Activated CD4-positive, alpha-beta T cell treated with anti-CD3 and anti-CD28 coated beads, Interleukin-2, amount 10 ng/mL, durations not matched to agents 24 days and 14 days (primary cell): ENCODE measurements at regions of chr3 and their contacts with region 1.

Region 1: DNA sequence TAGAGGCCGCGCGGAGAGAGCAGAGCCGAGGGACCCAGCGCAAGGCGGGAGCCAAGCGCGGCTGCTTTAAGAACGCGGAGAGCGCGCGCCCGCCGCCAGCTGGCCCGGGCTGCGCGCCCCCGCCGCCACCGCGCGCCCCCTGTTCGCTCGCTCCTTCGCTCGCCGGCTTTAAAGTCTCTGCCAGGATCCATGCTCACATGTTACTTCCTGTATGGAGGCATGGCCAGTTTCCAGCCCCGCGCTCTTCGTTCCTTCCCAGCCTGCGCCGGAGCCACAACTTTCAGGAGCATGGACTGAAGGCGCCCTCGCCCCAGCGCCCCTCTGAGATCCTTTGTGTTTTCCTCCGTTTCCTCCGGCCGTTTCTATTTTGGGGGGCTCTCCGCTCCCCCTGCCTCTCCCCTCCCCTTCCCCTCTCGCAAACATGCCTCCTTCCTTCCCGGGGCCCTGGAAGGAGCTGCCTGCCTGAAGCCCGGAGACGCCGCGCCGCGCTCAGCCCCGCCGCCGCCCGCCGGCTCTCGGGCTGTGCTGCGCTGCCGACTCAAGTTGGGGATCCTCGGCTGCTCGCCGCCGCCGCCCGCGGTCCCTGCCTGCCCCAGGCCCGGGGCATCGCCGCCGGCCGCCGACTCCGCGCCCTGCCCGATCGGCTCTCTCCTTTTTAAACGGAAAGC is at the start of gene PTPRG:
- DNase-seq: peak; percentile 84
- H3K4me3 Mint-ChIP-seq: peak within 1 kb of the TSS; percentile 96
- H3K27ac Mint-ChIP-seq: peak within 1 kb of the TSS; percentile 74
- H3K4me1 Mint-ChIP-seq: peaks cover 16% of the 10 kb centered on the region
- H3K27me3 Mint-ChIP-seq: peaks cover 59% of the 10 kb centered on the region
- total RNA-seq, gene PTPRG: 4.2 and 4.6 TPM in 2 replicates

Region 2: DNA sequence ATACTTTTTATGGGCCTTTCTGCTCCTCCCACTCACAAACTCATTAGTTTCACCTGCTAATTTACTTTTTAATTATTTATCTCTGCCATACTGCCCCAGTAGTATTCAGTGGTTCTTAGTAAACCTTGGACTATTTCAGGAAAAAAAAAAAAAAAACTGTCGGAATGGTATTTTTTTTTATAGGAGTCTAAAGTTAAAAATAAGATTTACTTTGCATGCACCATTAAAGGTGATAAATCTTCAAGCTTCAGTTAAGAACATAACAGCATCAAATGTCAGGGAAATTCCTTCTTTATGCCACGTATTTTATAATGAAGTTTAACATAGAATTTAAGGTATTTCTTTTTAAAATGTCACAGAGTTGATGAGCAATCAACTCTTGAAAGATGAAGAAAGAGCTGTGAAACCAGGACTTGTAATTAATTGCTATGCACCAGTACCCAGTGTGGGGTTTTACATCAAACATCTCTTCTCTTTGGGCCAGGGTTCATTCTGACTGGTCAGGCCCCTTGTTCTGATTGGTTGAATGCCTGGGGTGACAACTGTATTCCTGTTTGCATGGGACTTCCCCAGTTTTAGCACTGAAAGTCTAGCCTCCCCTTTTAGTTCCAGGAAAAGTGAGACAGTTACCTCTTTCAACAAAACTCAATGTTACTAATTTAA is 40.4 kb before region 1 on chr3:
- intact Hi-C with region 1: loop called (anchors 1 kb)
- DNase-seq: peak; percentile 84
- H3K4me3 Mint-ChIP-seq: peak overlapping the region; percentile 48
- H3K27ac Mint-ChIP-seq: peak overlapping the region; percentile 80
- H3K4me1 Mint-ChIP-seq: peaks cover 37% of the 10 kb centered on the region
- H3K27me3 Mint-ChIP-seq: no peaks in the 10 kb centered on the region

Region 3: GRCh38 chr3:62101488-62101887 is 540.0 kb after region 1 on chr3:
- intact Hi-C with region 1: no loop called
- DNase-seq: no peak
- H3K4me3 Mint-ChIP-seq: no peak overlapping the region
- H3K27ac Mint-ChIP-seq: no peak overlapping the region
- H3K4me1 Mint-ChIP-seq: no peaks in the 10 kb centered on the region
- H3K27me3 Mint-ChIP-seq: no peaks in the 10 kb centered on the region

Region 4: DNA sequence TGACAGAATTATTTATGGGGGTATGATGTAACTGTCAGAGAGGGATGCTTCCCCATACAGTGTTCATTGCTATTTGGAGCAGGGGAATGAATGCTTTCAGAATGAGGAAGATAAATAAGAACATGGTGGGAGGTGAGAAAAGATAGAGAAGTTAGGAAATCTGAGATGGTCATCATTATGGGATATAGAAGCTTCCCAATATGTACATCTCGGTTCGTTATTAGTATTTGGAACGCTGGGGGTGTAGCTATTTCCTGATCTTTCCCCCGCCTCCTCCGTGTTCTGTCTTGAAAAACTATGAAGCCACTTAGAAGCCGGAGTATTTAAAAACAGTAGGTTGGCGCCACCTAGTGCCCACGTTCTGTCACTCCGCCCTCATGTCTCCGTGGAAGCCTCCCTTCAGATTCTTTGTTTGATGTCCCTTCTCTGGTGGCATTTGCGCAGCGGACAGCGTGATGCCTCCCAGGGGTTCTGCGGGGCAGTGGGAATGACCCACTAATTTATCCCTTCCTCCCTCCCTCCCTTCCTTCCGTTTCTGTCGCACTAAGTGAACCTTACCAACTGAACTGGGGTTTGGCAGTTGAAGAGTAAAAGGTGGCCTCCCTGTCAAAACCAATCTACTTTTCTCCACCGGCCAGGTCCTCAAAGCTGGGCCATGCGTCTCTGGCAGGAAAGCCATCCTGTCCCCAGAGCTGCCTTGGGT is 627.3 kb after region 1 on chr3:
- intact Hi-C with region 1: loop called (anchors 5 kb)
- DNase-seq: peak; percentile 88
- H3K4me3 Mint-ChIP-seq: no peak overlapping the region
- H3K27ac Mint-ChIP-seq: no peak overlapping the region
- H3K4me1 Mint-ChIP-seq: peaks cover 4% of the 10 kb centered on the region
- H3K27me3 Mint-ChIP-seq: no peaks in the 10 kb centered on the region

Region 5: GRCh38 chr3:62374341-62375218 is 813.1 kb after region 1 on chr3:
- intact Hi-C with region 1: loop called (anchors 10 kb)
- DNase-seq: no peak
- H3K4me3 Mint-ChIP-seq: no peak overlapping the region
- H3K27ac Mint-ChIP-seq: no peak overlapping the region
- H3K4me1 Mint-ChIP-seq: no peaks in the 10 kb centered on the region
- H3K27me3 Mint-ChIP-seq: peaks cover 81% of the 10 kb centered on the region